Activated T-helper 1 cell treated with anti-CD3 and anti-CD28 coated beads, Interleukin-12 subunit alpha, Interleukin-12 subunit beta, Interleukin-2, Interleukin-4 antibody, amounts not matched to agents 30 ng/mL and 10 ng/mL and 1 ng/mL, durations not matched to agents 14 hours and 24 hours and 36 hours (primary cell): ENCODE measurements at regions of chr6 and their contacts with region 1.

Region 1: GRCh38 chr6:11353921-11354389 is 121.5 kb upstream of the NEDD9 start:
- DNase-seq: peak; percentile 58
- H3K4me3 Mint-ChIP-seq: peak overlapping the region; percentile 74
- H3K27ac Mint-ChIP-seq: peak overlapping the region; percentile 93
- H3K4me1 Mint-ChIP-seq: peaks cover 90% of the 10 kb centered on the region
- H3K27me3 Mint-ChIP-seq: no peaks in the 10 kb centered on the region

Region 2: DNA sequence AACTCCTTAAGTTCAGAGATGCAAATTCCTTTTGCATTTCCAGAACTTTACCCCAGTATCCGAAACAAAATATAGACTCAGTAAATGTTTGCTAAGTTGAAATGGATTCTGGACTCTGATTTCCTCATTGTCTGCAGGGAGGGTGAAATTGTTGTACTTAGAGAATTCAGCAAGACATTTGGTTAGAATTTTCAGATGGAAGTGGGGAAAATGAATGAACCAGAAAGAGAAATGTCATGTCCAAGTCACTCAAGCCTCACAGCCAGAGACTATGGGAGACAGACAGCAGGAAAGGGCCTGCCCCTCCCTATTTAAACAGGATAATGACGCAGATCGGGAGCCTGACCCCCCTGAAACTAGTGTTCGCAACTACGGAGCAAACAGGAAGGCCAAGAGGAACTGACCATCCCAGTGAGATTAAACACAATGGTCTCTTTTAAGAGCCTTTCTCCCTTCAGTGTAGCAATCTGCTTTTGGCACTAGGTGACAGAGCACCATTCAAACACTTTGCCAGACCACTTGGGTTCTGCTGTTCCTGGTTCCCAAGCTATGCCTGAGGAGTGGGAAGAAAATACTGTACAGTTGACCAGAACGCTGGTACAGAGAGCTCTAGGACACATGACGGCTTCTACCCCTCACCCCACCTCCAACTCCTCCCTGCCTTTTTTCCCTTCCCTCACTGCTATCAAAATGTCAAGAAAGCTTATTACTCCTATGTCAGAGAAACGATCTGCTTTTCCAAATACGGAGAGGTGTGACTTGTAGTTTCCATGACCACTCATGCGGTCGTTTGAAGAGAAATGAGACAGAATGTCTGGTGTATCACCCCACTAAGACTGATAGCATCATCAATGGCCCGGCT is 135.2 kb before region 1 on chr6:
- intact Hi-C with region 1: no loop called
- DNase-seq: no peak
- H3K4me3 Mint-ChIP-seq: peak overlapping the region; percentile 24
- H3K27ac Mint-ChIP-seq: peak overlapping the region; percentile 55
- H3K4me1 Mint-ChIP-seq: peaks cover 79% of the 10 kb centered on the region
- H3K27me3 Mint-ChIP-seq: no peaks in the 10 kb centered on the region

Region 3: GRCh38 chr6:11381801-11382513 is 28.0 kb after region 1 on chr6:
- intact Hi-C with region 1: loop called (anchors 1 kb)
- DNase-seq: peak; percentile 69
- H3K4me3 Mint-ChIP-seq: peak overlapping the region; percentile 92
- H3K27ac Mint-ChIP-seq: peak overlapping the region; percentile 96
- H3K4me1 Mint-ChIP-seq: peaks cover 75% of the 10 kb centered on the region
- H3K27me3 Mint-ChIP-seq: no peaks in the 10 kb centered on the region